Adrenal gland (tissue), 19 donors: ENCODE measurements at regions of chr12 and their contacts with region 1.

Region 1: GRCh38 chr12:132003846-132004245 is 54.1 kb downstream of the EP400 start:
- DNase-seq: no peak
- H3K4me3 ChIP-seq: no peak overlapping the region
- H3K27ac ChIP-seq: no peak overlapping the region
- H3K4me1 ChIP-seq: no peaks in the 10 kb centered on the region
- H3K27me3 ChIP-seq: no peaks in the 10 kb centered on the region
- CTCF ChIP-seq: no peak
- POLR2A ChIP-seq: no peak

Region 2: GRCh38 chr12:131850856-131851559 is 152.8 kb before region 1 on chr12:
- intact Hi-C with region 1: loop called in 1 of 2 experiments (anchors 5 kb)
- DNase-seq: peak in 6 of 7 donors; percentile 59 to 77 (median 68)
- H3K4me3 ChIP-seq: no peak overlapping the region
- H3K27ac ChIP-seq: no peak overlapping the region
- H3K4me1 ChIP-seq: peaks cover 0 to 7% of the 10 kb centered on the region in 2 donors
- H3K27me3 ChIP-seq: no peaks in the 10 kb centered on the region
- CTCF ChIP-seq: peak; percentile 61 to 94 (median 84)
- POLR2A ChIP-seq: no peak